Psoas muscle (tissue), 8 donors: ENCODE measurements at regions of chr4 and their contacts with region 1.

Region 1: GRCh38 chr4:94595879-94596483 is 144.2 kb downstream of the PDLIM5 start:
- DNase-seq: no peak
- ATAC-seq: peak in 3 of 4 donors; percentile 29 to 63 (median 47)
- H3K4me3 ChIP-seq: no peak overlapping the region
- H3K27ac ChIP-seq: no peak overlapping the region
- H3K4me1 ChIP-seq: peaks cover 16% of the 10 kb centered on the region
- H3K27me3 ChIP-seq: no peaks in the 10 kb centered on the region
- CTCF ChIP-seq: peak; percentile 64

Region 2: GRCh38 chr4:94304365-94304971 is 291.5 kb before region 1 on chr4:
- intact Hi-C with region 1: loop called (anchors 10 kb)
- DNase-seq: no peak
- ATAC-seq: peak in 1 of 4 donors; percentile 68
- H3K4me3 ChIP-seq: no peak overlapping the region
- H3K27ac ChIP-seq: no peak overlapping the region
- H3K4me1 ChIP-seq: peaks cover 8% of the 10 kb centered on the region
- H3K27me3 ChIP-seq: no peaks in the 10 kb centered on the region
- CTCF ChIP-seq: peak; percentile 66

Region 3: GRCh38 chr4:94406668-94407437 is 189.1 kb before region 1 on chr4:
- intact Hi-C with region 1: loop called (anchors 2 kb)
- DNase-seq: peak; percentile 62 to 63
- ATAC-seq: peak; percentile 41 to 60 (median 54)
- H3K4me3 ChIP-seq: peak overlapping the region; percentile 44
- H3K27ac ChIP-seq: peak overlapping the region; percentile 90
- H3K4me1 ChIP-seq: peaks cover 13% of the 10 kb centered on the region
- H3K27me3 ChIP-seq: no peaks in the 10 kb centered on the region
- CTCF ChIP-seq: peak; percentile 94

Region 4: DNA sequence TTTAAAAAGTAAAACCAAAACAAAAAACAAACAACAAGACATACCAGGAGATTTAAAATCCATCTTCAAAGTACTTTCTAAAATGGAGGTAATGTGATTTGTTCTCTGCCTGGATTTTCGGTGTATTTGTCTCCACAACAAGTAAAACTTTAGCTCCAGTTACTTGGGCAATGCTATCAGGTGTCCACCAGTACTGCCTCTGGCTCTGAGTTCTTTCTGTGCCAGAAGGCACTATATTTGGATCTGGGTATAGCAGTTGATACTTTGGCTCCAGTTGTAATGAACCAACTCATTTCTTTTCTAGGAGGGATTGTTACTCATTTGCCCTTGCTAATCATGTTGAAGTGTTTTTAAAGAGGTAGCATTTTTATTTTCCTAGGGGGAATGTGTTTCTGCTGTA is 153.7 kb before region 1 on chr4:
- intact Hi-C with region 1: no loop called
- DNase-seq: no peak
- ATAC-seq: peak; percentile 98
- H3K4me3 ChIP-seq: peak overlapping the region; percentile 33
- H3K27ac ChIP-seq: peak overlapping the region; percentile 81
- H3K4me1 ChIP-seq: peaks cover 27% of the 10 kb centered on the region
- H3K27me3 ChIP-seq: no peaks in the 10 kb centered on the region
- CTCF ChIP-seq: no peak